CD4-positive, alpha-beta memory T cell (primary cell): ENCODE measurements at regions of chr6 and their contacts with region 1.

Region 1: DNA sequence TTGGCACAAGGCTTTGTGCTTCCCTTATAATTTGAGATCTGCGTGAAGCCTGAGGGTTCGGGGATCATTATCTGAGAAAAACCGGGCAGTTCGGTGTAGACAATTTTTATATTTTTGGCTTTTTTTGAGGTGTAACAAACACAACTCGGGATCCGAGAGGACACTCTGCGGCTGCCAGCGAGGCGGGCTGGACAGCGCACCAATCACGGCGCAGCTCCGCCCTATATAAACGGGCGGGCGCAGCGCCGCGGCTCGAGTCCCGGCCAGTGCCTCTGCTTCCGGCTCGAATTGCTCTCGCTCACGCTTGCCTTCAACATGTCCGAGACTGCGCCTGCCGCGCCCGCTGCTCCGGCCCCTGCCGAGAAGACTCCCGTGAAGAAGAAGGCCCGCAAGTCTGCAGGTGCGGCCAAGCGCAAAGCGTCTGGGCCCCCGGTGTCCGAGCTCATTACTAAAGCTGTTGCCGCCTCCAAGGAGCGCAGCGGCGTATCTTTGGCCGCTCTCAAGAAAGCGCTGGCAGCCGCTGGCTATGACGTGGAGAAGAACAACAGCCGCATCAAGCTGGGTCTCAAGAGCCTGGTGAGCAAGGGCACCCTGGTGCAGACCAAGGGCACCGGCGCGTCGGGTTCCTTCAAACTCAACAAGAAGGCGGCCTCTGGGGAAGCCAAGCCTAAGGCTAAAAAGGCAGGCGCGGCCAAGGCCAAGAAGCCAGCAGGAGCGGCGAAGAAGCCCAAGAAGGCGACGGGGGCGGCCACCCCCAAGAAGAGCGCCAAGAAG is 69.0 kb downstream of the HFE start:
- DNase-seq: peak; percentile 80 to 89 (median 88)
- H3K4me3 ChIP-seq: peak overlapping the region; percentile 53 to 64
- H3K4me3 Mint-ChIP-seq: peak overlapping the region; percentile 88 to 99 (median 96)
- H3K27ac ChIP-seq: peak overlapping the region; percentile 79
- H3K27ac Mint-ChIP-seq: peak overlapping the region; percentile 91 to 98 (median 95)
- H3K4me1 ChIP-seq: peaks cover 26% of the 10 kb centered on the region
- H3K4me1 Mint-ChIP-seq: peaks cover 16 to 58% (median 26%) of the 10 kb centered on the region in 4 donors
- H3K27me3 ChIP-seq: no peaks in the 10 kb centered on the region
- H3K27me3 Mint-ChIP-seq: no peaks in the 10 kb centered on the region

Region 2: GRCh38 chr6:25971187-25971811 is 185.0 kb before region 1 on chr6:
- CTCF ChIA-PET with region 1: no interaction called
- POLR2A ChIA-PET with region 1: no interaction called
- intact Hi-C with region 1: no loop called
- DNase-seq: no peak
- H3K4me3 ChIP-seq: no peak overlapping the region
- H3K4me3 Mint-ChIP-seq: peak overlapping the region in 1 of 8 donors; percentile 19
- H3K27ac ChIP-seq: no peak overlapping the region
- H3K27ac Mint-ChIP-seq: peak overlapping the region in 6 of 7 donors; percentile 16 to 88 (median 73)
- H3K4me1 ChIP-seq: peaks cover 52% of the 10 kb centered on the region
- H3K4me1 Mint-ChIP-seq: peaks cover 47 to 70% (median 54%) of the 10 kb centered on the region in 4 donors
- H3K27me3 ChIP-seq: no peaks in the 10 kb centered on the region
- H3K27me3 Mint-ChIP-seq: no peaks in the 10 kb centered on the region

Region 3: DNA sequence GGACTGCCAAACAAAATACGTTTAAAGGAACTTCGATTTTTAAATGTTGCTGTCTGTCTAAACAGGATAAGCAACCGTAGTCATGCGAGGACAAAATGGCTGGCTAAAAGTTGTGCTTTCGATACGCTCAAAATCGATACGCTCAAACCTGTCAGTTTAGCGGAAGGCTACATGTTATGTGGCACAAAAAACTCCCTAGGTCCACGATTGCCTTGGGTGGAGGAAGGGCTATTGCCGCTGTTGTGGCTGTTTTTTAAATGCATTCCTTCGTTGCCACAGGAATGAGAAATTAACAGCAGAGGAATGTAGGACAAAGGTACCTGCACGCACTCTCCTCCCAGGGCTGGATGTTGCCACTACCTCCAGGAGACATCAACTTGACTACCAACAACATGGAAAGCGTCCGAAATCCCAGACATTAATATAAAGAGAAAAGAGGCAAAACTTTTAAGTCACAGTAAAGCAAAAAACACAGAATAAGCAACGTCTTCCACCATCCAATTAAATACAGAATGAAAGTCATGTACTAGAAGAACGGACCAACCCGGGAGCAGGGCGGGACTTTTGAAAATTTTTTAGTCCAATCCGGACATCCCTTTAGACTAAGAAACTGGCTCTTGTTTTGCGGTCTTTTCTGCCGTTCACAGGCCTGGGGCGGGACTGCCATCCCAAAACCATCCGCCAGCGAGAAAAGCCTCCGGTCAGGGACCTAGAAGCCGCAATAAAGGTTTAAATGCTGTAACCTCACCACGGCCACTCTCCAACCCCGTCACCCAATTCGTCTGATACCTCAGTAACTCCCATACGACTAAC is 101.2 kb before region 1 on chr6:
- CTCF ChIA-PET with region 1: no interaction called
- POLR2A ChIA-PET with region 1: interaction called, 263 read pairs
- intact Hi-C with region 1: loop called (anchors 1 kb)
- DNase-seq: peak; percentile 89 to 96 (median 91)
- H3K4me3 ChIP-seq: peak overlapping the region; percentile 67 to 78
- H3K4me3 Mint-ChIP-seq: peak overlapping the region; percentile 93 to 96 (median 94)
- H3K27ac ChIP-seq: peak overlapping the region; percentile 84
- H3K27ac Mint-ChIP-seq: peak overlapping the region; percentile 91 to 98 (median 98)
- H3K4me1 ChIP-seq: peaks cover 24% of the 10 kb centered on the region
- H3K4me1 Mint-ChIP-seq: peaks cover 7 to 34% (median 15%) of the 10 kb centered on the region in 4 donors
- H3K27me3 ChIP-seq: no peaks in the 10 kb centered on the region
- H3K27me3 Mint-ChIP-seq: no peaks in the 10 kb centered on the region

Region 4: DNA sequence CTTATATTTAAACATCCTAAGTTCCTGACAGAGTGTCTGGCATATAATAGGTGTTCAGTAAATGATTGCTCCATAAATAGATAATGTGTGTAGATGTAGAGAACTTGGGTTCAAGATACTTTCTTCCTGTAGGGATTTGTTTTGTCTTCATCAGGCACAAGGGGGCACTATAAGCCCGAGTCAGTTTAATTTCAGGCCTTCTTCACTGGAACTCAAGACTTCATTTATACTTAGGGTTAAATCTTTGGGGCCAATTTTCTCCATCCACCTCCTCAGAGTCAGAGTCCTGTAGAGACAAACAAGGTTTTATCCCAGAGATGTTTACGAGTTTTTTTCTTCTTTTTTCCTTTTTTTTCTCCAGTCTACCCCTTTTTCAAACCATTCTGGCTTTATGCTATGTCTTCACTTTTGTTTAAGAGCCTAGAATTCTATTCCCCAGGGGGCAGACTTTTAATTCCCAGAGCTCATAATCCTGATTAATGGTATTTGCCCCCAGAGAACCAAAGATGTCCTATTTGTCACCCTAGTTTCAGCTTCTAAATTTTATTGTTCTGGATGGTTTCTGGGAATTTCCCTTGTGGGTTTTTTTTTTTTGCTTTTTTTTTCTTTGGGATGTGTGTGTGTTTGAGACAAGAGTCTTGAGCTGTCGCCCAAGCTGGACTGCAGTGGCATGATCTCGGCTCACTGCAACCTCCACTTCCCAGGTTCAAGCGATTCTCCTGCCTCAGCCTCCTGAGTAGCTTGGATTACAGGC is 19.3 kb after region 1 on chr6:
- CTCF ChIA-PET with region 1: interaction called, 29 read pairs
- POLR2A ChIA-PET with region 1: interaction called, 831 read pairs
- intact Hi-C with region 1: loop called (anchors 1 kb)
- DNase-seq: peak; percentile 50 to 73 (median 70)
- H3K4me3 ChIP-seq: no peak overlapping the region
- H3K4me3 Mint-ChIP-seq: peak overlapping the region in 4 of 8 donors; percentile 37 to 70 (median 65)
- H3K27ac ChIP-seq: no peak overlapping the region
- H3K27ac Mint-ChIP-seq: peak overlapping the region; percentile 28 to 89 (median 78)
- H3K4me1 ChIP-seq: peaks cover 37% of the 10 kb centered on the region
- H3K4me1 Mint-ChIP-seq: peaks cover 21 to 40% (median 27%) of the 10 kb centered on the region in 4 donors
- H3K27me3 ChIP-seq: no peaks in the 10 kb centered on the region
- H3K27me3 Mint-ChIP-seq: no peaks in the 10 kb centered on the region

Region 5: DNA sequence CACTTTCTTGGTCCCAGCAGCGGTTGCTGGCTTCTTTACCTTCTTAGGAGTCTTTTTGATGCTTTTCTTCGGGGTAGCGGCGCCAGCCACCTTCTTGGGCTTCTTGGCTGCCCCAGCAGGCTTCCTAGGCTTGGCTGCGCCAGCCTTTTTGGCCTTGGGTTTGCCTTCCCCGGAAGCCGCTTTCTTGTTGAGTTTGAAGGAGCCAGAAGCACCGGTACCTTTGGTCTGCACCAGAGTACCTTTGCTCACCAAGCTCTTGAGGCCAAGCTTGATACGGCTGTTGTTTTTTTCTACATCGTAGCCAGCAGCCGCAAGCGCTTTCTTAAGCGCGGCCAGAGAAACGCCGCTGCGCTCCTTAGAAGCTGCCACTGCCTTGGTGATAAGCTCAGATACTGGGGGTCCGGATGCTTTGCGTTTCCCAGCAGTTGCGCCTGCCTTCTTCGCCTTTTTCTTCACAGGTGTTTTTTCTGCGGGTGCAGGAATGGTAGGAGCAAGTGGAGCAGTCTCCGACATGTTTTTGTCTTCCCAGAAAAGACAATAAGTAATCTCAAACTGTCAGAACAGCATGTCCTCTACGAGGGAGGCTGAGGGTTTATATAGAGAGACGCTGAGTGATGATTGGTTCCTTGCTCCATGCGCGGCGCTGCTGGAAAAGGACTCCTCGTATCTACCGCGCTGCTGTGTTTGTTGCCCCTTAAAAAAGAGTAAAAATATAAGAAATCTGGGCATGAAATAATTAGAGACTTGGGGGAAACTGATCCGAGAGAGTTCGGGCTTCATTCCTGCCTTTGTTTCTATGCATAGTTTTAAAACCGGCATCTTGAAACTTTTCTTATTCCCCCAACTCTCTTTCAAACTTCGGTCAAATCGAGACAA is 78.4 kb after region 1 on chr6:
- CTCF ChIA-PET with region 1: no interaction called
- POLR2A ChIA-PET with region 1: interaction called, 283 read pairs
- intact Hi-C with region 1: loop called (anchors 2 kb)
- DNase-seq: peak; percentile 70 to 87 (median 85)
- H3K4me3 ChIP-seq: peak overlapping the region; percentile 66 to 95
- H3K4me3 Mint-ChIP-seq: peak overlapping the region; percentile 93 to 99 (median 96)
- H3K27ac ChIP-seq: peak overlapping the region; percentile 83
- H3K27ac Mint-ChIP-seq: peak overlapping the region; percentile 90 to 99 (median 96)
- H3K4me1 ChIP-seq: peaks cover 23% of the 10 kb centered on the region
- H3K4me1 Mint-ChIP-seq: peaks cover 18 to 43% (median 26%) of the 10 kb centered on the region in 4 donors
- H3K27me3 ChIP-seq: no peaks in the 10 kb centered on the region
- H3K27me3 Mint-ChIP-seq: no peaks in the 10 kb centered on the region

Region 6: GRCh38 chr6:26537846-26538571 is 381.7 kb after region 1 on chr6 and contains the start of gene HMGN4:
- CTCF ChIA-PET with region 1: interaction called, 3 read pairs
- POLR2A ChIA-PET with region 1: interaction called, 15 read pairs
- intact Hi-C with region 1: no loop called
- DNase-seq: peak; percentile 92 to 96 (median 95)
- H3K4me3 ChIP-seq: peak within 1 kb of the TSS; percentile 83 to 90
- H3K4me3 Mint-ChIP-seq: peak within 1 kb of the TSS; percentile 89 to 98 (median 93)
- H3K27ac ChIP-seq: peak within 1 kb of the TSS; percentile 90
- H3K27ac Mint-ChIP-seq: peak within 1 kb of the TSS; percentile 94 to 99 (median 97)
- H3K4me1 ChIP-seq: peaks cover 66% of the 10 kb centered on the region
- H3K4me1 Mint-ChIP-seq: peaks cover 38 to 76% (median 56%) of the 10 kb centered on the region in 4 donors
- H3K27me3 ChIP-seq: no peaks in the 10 kb centered on the region
- H3K27me3 Mint-ChIP-seq: peaks cover 3 to 6% of the 10 kb centered on the region in 2 donors
- total RNA-seq, gene HMGN4: 102 to 105 TPM

Region 7: GRCh38 chr6:27838058-27838944 is 1682.0 kb after region 1 on chr6:
- CTCF ChIA-PET with region 1: interaction called, 3 read pairs
- POLR2A ChIA-PET with region 1: interaction called, 96 read pairs
- intact Hi-C with region 1: no loop called
- DNase-seq: peak; percentile 91 to 94 (median 92)
- H3K4me3 ChIP-seq: peak overlapping the region; percentile 63 to 67
- H3K4me3 Mint-ChIP-seq: no peak overlapping the region
- H3K27ac ChIP-seq: peak overlapping the region; percentile 93
- H3K27ac Mint-ChIP-seq: no peak overlapping the region
- H3K4me1 ChIP-seq: peaks cover 30% of the 10 kb centered on the region
- H3K4me1 Mint-ChIP-seq: peaks cover 6 to 20% (median 12%) of the 10 kb centered on the region in 4 donors
- H3K27me3 ChIP-seq: no peaks in the 10 kb centered on the region
- H3K27me3 Mint-ChIP-seq: peaks cover 2 to 3% of the 10 kb centered on the region in 2 donors